Aorta (tissue), 5 donors: ENCODE measurements at regions of chr19 and their contacts with region 1.

Region 1: DNA sequence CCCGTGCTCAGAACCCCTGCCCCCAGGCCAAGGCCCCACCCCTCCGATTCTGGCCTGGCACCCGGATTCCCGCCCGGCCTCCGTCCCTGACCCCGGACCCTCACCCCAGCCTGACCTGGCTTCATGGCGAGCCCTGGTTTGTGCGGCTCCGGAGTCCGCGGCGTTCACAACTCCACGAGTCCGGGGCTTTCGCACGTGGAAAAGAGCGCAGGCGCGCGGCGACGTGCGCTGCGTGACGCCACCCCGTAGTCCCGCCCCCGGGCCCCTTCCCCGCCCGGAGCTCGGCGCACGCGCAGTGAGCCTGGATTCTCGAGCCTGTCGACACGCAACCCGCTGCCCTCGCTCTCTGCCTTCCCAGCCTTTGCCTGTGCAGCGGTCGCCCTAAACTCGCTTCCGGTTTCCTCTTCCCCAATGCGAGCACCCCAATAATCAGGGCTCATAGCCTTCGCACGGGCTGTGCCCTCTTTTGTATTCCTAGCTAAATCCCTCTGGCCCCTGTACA is at the start of gene FBL:
- DNase-seq: peak; percentile 98 to 100
- ATAC-seq: peak; percentile 97
- H3K4me3 ChIP-seq: peak within 1 kb of the TSS; percentile 36 to 81
- H3K27ac ChIP-seq: peak within 1 kb of the TSS; percentile 51 to 93
- H3K4me1 ChIP-seq: peaks cover 0 to 2% of the 10 kb centered on the region in 2 donors
- H3K27me3 ChIP-seq: no peaks in the 10 kb centered on the region
- total RNA-seq, gene FBL: 121 to 150 TPM

Region 2: GRCh38 chr19:39539519-39540332 is 306.5 kb before region 1 on chr19 and contains the start of gene EID2:
- intact Hi-C with region 1: loop called in 1 of 2 experiments (anchors 10 kb)
- DNase-seq: peak; percentile 97 to 99
- ATAC-seq: peak; percentile 98
- H3K4me3 ChIP-seq: peak within 1 kb of the TSS; percentile 67 to 98
- H3K27ac ChIP-seq: peak within 1 kb of the TSS; percentile 64 to 76
- H3K4me1 ChIP-seq: no peaks in the 10 kb centered on the region
- H3K27me3 ChIP-seq: no peaks in the 10 kb centered on the region
- total RNA-seq, gene EID2: 9.7 to 13.0 TPM

Region 3: DNA sequence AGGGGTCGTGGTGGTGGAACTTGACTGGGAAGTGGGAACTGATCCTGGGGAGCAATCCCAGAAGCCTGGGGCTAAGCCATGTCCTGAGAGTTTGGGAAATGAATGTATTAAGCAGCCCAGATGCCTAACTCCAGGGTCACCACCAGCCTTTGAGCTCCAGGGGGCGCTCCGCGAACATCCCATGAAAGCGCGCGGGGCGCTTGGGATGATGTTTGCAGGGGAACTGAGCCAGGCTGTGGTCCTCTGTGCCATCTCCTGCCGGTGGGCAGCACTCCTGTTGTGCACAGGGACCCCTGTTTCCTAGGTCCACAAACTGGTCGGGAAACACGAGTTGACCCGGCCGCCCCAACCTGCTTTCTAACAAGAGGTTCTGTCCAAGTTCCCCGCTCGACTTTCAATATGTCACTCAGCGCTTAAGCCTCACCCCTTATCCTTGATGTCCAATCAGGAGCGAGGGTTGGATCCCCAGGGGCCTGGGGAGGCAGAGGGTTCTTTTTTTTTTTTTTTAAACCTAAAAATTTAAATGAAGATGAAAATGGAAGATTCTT is 53.2 kb before region 1 on chr19:
- intact Hi-C with region 1: loop called (anchors 2 to 5 kb)
- DNase-seq: peak; percentile 85 to 94
- ATAC-seq: peak; percentile 94
- H3K4me3 ChIP-seq: peak overlapping the region; percentile 57 to 80
- H3K27ac ChIP-seq: no peak overlapping the region
- H3K4me1 ChIP-seq: no peaks in the 10 kb centered on the region
- H3K27me3 ChIP-seq: no peaks in the 10 kb centered on the region

Region 4: GRCh38 chr19:39970675-39971379 is 124.6 kb after region 1 on chr19 and contains the start of gene PSMC4:
- intact Hi-C with region 1: loop called in 1 of 2 experiments (anchors 5 kb)
- DNase-seq: peak; percentile 99
- ATAC-seq: peak; percentile 100
- H3K4me3 ChIP-seq: peak within 1 kb of the TSS; percentile 79 to 91
- H3K27ac ChIP-seq: peak within 1 kb of the TSS in 1 of 2 donors; percentile 88
- H3K4me1 ChIP-seq: no peaks in the 10 kb centered on the region
- H3K27me3 ChIP-seq: no peaks in the 10 kb centered on the region
- total RNA-seq, gene PSMC4: 53.3 to 66.8 TPM

Region 5: GRCh38 chr19:40221858-40222837 is 375.9 kb after region 1 on chr19:
- intact Hi-C with region 1: loop called in 1 of 2 experiments (anchors 5 kb)
- DNase-seq: peak; percentile 85 to 89
- ATAC-seq: peak; percentile 87
- H3K4me3 ChIP-seq: no peak overlapping the region
- H3K27ac ChIP-seq: no peak overlapping the region
- H3K4me1 ChIP-seq: no peaks in the 10 kb centered on the region
- H3K27me3 ChIP-seq: no peaks in the 10 kb centered on the region